ENCODE measurements at regions of chr16 and their contacts with region 1.

Region 1: GRCh38 chr16:14298381-14299119 is 227.4 kb downstream of the MRTFB start:
- DNase-seq: no peak
- ATAC-seq: no peak
- H3K4me3 ChIP-seq: no peak overlapping the region
- H3K27ac ChIP-seq: no peak overlapping the region
- H3K4me1 ChIP-seq: peaks cover 8% of the 10 kb centered on the region
- H3K27me3 ChIP-seq: no peaks in the 10 kb centered on the region
- CTCF ChIP-seq: no peak
- POLR2A ChIP-seq: no peak

Region 2: DNA sequence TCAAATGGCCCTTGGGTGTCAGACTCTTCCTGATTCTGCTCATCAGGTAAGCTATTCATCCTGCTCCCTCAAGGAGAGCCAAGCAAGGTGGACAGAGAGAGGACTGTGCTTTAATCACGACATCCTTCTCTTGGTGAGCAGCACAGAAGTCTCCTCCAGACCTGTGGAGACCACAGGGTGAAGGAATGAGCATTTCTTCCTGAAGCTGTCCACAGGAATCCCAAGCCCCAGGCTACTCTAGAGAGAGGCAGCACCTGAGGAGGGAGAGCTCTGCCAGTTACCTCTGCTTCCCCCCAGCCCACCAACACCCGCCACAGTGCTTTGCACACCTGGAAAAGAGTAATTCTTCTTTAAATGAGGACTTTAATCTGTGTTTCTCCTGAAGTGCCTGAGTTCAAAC is 231.5 kb after region 1 on chr16:
- intact Hi-C with region 1: loop called (anchors 2 kb)
- DNase-seq: no peak
- ATAC-seq: no peak
- H3K4me3 ChIP-seq: no peak overlapping the region
- H3K27ac ChIP-seq: no peak overlapping the region
- H3K4me1 ChIP-seq: peaks cover 33% of the 10 kb centered on the region
- H3K27me3 ChIP-seq: no peaks in the 10 kb centered on the region
- CTCF ChIP-seq: no peak
- POLR2A ChIP-seq: no peak

Measured in body of pancreas (tissue), 4 donors.